Psoas muscle (tissue), 8 donors: ENCODE measurements at regions of chr11 and their contacts with region 1.

Region 1: GRCh38 chr11:36564376-36565030 is 3.3 kb upstream of the RAG1 start:
- DNase-seq: no peak
- ATAC-seq: peak in 3 of 4 donors; percentile 54 to 88 (median 66)
- H3K4me3 ChIP-seq: peak overlapping the region; percentile 66
- H3K27ac ChIP-seq: no peak overlapping the region
- H3K4me1 ChIP-seq: no peaks in the 10 kb centered on the region
- H3K27me3 ChIP-seq: no peaks in the 10 kb centered on the region
- CTCF ChIP-seq: peak; percentile 67

Region 2: GRCh38 chr11:36550385-36551115 is 14.0 kb before region 1 on chr11:
- intact Hi-C with region 1: no loop called
- DNase-seq: no peak
- ATAC-seq: no peak
- H3K4me3 ChIP-seq: no peak overlapping the region
- H3K27ac ChIP-seq: no peak overlapping the region
- H3K4me1 ChIP-seq: no peaks in the 10 kb centered on the region
- H3K27me3 ChIP-seq: no peaks in the 10 kb centered on the region
- CTCF ChIP-seq: no peak

Region 3: GRCh38 chr11:36622431-36623136 is 58.1 kb after region 1 on chr11:
- intact Hi-C with region 1: loop called in 1 of 2 experiments (anchors 5 kb)
- DNase-seq: no peak
- ATAC-seq: peak in 2 of 4 donors; percentile 54 to 57
- H3K4me3 ChIP-seq: no peak overlapping the region
- H3K27ac ChIP-seq: no peak overlapping the region
- H3K4me1 ChIP-seq: peaks cover 13% of the 10 kb centered on the region
- H3K27me3 ChIP-seq: no peaks in the 10 kb centered on the region
- CTCF ChIP-seq: peak; percentile 40

Region 4: GRCh38 chr11:36657610-36658267 is 93.2 kb after region 1 on chr11:
- intact Hi-C with region 1: no loop called
- DNase-seq: no peak
- ATAC-seq: no peak
- H3K4me3 ChIP-seq: no peak overlapping the region
- H3K27ac ChIP-seq: no peak overlapping the region
- H3K4me1 ChIP-seq: no peaks in the 10 kb centered on the region
- H3K27me3 ChIP-seq: no peaks in the 10 kb centered on the region
- CTCF ChIP-seq: no peak

Region 5: GRCh38 chr11:36672813-36673450 is 108.4 kb after region 1 on chr11:
- intact Hi-C with region 1: loop called (anchors 1 to 5 kb)
- DNase-seq: no peak
- ATAC-seq: no peak
- H3K4me3 ChIP-seq: no peak overlapping the region
- H3K27ac ChIP-seq: no peak overlapping the region
- H3K4me1 ChIP-seq: no peaks in the 10 kb centered on the region
- H3K27me3 ChIP-seq: no peaks in the 10 kb centered on the region
- CTCF ChIP-seq: peak; percentile 87

Region 6: DNA sequence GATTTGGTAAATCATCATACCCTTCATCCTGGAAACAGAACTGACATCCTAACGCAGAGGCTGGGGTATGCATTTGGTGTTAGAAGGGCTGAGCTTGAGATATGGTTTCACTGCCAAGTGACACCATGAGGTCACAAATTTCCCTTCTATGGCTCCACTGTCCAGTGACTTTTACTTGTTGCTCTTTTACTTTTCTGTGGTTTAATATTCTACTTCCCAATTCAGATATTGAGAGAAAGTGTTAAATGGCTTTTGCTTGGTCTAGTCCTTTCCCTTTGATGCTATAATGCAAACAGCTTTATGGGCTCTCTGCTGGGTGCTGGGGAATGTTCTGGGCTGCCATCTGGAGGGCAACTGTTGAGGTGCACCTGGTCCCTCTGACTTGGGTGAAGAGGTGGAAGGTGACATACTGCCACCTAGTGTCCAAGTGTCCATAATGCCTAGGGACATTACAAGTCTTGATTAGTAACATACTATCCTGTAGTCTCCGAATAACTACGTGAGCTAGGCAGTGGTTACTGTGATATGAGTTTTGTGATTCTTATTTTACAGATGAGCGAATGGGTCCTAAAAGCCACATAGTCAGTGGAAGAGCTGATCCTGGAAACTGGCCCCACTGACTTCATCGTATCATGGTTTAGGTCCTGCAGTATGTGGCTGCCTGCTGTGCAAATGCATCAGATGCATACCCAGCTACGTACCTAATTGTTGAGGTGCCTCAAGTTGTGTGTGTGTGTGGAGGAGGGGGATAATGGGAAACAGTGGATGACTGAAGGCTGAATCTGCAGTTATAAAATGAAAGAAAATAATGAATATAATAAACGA is 182.6 kb after region 1 on chr11:
- intact Hi-C with region 1: loop called (anchors 5 kb)
- DNase-seq: peak; percentile 65 to 86
- ATAC-seq: peak; percentile 95 to 100 (median 99)
- H3K4me3 ChIP-seq: no peak overlapping the region
- H3K27ac ChIP-seq: no peak overlapping the region
- H3K4me1 ChIP-seq: no peaks in the 10 kb centered on the region
- H3K27me3 ChIP-seq: no peaks in the 10 kb centered on the region
- CTCF ChIP-seq: peak; percentile 98